Adrenal gland (tissue), 19 donors: ENCODE measurements at regions of chr2 and their contacts with region 1.

Region 1: DNA sequence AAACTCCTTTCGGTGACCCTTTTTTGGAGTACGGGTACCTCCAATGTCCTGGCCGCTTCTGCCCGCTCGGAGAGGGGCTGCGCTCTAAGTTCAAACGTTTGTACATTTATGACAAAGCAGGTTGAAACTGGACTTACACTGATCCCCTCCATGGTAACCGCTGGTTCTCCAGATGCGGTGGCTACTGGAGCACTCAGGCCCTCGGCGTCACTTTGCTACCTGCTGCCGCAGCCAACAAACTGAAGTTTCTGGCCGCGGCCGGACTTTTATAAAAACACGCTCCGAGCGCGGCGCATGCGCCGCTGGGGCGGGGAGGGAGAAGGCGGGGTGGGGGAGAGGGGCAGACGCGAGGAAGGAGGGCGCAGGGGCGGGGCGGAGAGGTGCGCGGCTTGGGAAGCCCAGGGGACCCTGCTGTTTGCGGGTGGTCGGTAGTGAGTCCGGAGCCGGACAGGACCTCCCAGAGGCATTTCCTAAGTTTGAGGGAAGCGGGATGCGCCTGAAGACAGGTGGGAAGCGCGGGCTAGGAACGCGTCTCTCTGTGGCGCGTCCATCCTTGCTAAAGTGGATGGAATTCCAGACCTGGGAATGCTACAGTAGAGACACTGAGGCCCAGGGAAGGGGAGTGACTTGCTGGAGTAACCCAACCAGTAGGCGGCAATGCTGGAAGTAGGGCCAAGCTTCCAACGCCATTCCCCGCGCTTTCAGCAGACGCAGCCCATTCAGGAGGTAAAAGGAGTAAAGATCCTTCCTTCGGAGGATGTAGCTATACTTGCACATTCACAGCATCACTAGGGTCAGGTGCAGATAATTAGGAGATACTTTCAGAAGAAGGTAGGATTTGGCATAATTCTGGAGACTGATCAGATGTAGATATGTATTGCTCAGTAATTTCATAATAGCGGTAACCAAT is at the start of gene CXCR4:
- DNase-seq: peak; percentile 76 to 89 (median 81)
- H3K4me3 ChIP-seq: peak within 1 kb of the TSS; percentile 7 to 74 (median 59)
- H3K27ac ChIP-seq: peak within 1 kb of the TSS in 4 of 5 donors; percentile 36 to 75 (median 54)
- H3K4me1 ChIP-seq: peaks cover 10 to 37% of the 10 kb centered on the region in 2 donors
- H3K27me3 ChIP-seq: no peaks in the 10 kb centered on the region
- CTCF ChIP-seq: peak in 2 of 6 experiments; percentile 18 to 25
- POLR2A ChIP-seq: peak; percentile 83 to 94
- total RNA-seq, gene CXCR4: 21.9 to 344 (median 72.8) TPM

Region 2: GRCh38 chr2:136384531-136385303 is 266.6 kb after region 1 on chr2:
- intact Hi-C with region 1: loop called in 1 of 2 experiments (anchors 5 kb)
- DNase-seq: peak; percentile 48 to 79 (median 66)
- H3K4me3 ChIP-seq: no peak overlapping the region
- H3K27ac ChIP-seq: no peak overlapping the region
- H3K4me1 ChIP-seq: peaks cover 5 to 18% of the 10 kb centered on the region in 2 donors
- H3K27me3 ChIP-seq: no peaks in the 10 kb centered on the region
- CTCF ChIP-seq: peak; percentile 39 to 83 (median 80)
- POLR2A ChIP-seq: no peak

Region 3: GRCh38 chr2:136510244-136510643 is 392.1 kb after region 1 on chr2:
- intact Hi-C with region 1: no loop called
- DNase-seq: no peak
- H3K4me3 ChIP-seq: no peak overlapping the region
- H3K27ac ChIP-seq: no peak overlapping the region
- H3K4me1 ChIP-seq: no peaks in the 10 kb centered on the region
- H3K27me3 ChIP-seq: no peaks in the 10 kb centered on the region
- CTCF ChIP-seq: no peak
- POLR2A ChIP-seq: no peak